Ovary (tissue), 10 donors: ENCODE measurements at regions of chr5 and their contacts with region 1.

Region 1: DNA sequence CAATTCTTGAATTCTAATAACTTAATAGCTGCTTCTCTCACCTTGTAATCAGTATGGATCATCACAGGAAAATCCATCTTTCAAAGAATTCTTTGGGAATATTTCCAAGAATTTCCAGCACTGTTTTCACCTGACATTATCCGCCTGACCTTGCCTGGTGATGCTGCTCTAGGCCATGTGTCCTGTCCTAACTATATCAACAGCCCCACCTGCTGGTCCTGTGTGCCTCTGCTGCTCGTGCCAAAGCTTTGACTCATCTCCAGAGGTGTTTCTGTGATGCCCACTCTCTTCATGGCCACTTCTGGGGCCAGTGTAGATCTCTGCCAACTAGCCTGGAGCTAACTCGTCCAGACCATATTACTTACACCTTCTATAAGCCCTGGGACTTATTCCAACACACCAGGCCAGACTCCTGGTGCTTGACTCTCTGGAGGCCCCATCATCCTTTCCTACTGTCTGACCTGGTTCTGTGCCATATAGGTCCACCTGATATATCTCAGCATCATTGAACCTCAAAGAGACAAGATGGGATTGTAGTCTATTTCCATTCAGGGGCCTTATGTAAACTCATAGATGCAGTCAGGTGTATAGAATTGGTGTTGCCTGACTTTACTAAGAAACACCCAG is 67.5 kb upstream of the CKMT2 start:
- DNase-seq: peak; percentile 64 to 78 (median 69)
- H3K4me3 ChIP-seq: no peak overlapping the region
- H3K27ac ChIP-seq: no peak overlapping the region
- H3K4me1 ChIP-seq: peaks cover 2% of the 10 kb centered on the region
- H3K27me3 ChIP-seq: no peaks in the 10 kb centered on the region
- CTCF ChIP-seq: peak in 1 of 3 donors; percentile 25
- EP300 ChIP-seq: no peak
- POLR2A ChIP-seq: no peak

Region 2: DNA sequence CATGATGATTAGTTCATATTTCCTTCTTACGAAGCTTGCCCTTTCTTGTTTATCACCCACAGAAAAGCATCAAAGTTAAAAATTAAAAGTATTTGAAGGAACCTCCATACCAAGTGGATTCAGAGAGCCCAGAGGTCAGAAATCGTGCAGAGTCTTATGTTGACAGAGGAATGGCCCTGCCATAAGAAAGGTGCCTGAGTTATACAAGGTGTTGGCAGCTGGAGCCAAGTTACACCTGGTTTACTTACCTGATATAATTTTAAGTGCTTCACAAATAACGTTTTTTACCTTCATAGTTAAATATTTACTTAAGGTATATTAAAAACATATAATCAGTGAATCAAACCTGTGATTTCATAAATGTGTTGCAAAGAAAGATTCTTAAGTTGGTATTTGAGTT is 468.5 kb before region 1 on chr5:
- intact Hi-C with region 1: loop called in 1 of 4 experiments (anchors 10 kb)
- DNase-seq: no peak
- H3K4me3 ChIP-seq: no peak overlapping the region
- H3K27ac ChIP-seq: no peak overlapping the region
- H3K4me1 ChIP-seq: no peaks in the 10 kb centered on the region
- H3K27me3 ChIP-seq: no peaks in the 10 kb centered on the region
- CTCF ChIP-seq: no peak
- EP300 ChIP-seq: no peak
- POLR2A ChIP-seq: no peak